HepG2 (cell line): ENCODE measurements at regions of chr14 and their contacts with region 1.

Region 1: GRCh38 chr14:34714320-34715126 is at the start of gene CFL2:
- DNase-seq: peak; percentile 86
- ATAC-seq: peak; percentile 98
- H3K4me3 ChIP-seq: peak within 1 kb of the TSS; percentile 92 to 97 (median 96)
- H3K27ac ChIP-seq: peak within 1 kb of the TSS; percentile 80
- H3K4me1 ChIP-seq: peaks cover 38% of the 10 kb centered on the region
- H3K27me3 ChIP-seq: peaks cover 0 to 11% of the 10 kb centered on the region in 2 experiments; a peak in 4 of 5 replicates
- CTCF ChIP-seq: no peak; the same call in 1 of the 2 replicates
- EP300 ChIP-seq: peak in 1 of 2 experiments; percentile 28; a peak in 1 of 4 replicates
- POLR2A ChIP-seq: peak; percentile 83 to 85
- RAD21 ChIP-seq: peak; percentile 71
- total RNA-seq, gene CFL2: 158 and 301 TPM in 2 replicates

Region 2: DNA sequence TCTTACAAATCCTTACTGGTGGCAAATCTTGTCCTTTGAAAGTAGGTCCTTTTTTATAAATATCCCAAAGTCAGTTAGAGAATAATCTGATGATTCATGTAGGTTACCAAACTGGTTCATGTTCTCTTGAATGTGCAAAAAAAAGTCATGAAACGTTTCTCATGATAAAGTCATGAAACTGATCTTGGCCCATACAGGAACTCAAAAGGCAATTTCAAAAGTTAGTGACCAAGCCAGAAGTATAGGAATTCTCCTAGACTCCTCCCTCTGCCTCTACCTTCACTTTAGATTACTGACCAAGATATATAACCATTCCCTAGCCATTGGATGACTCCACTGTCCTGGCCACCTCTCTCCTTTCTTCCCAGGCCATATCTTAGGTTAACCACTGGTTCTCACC is 225.2 kb before region 1 on chr14:
- CTCF ChIA-PET with region 1: no interaction called
- POLR2A ChIA-PET with region 1: no interaction called
- in situ Hi-C with region 1: no loop called
- intact Hi-C with region 1: no loop called
- DNase-seq: no peak
- ATAC-seq: no peak
- H3K4me3 ChIP-seq: no peak overlapping the region
- H3K27ac ChIP-seq: no peak overlapping the region
- H3K4me1 ChIP-seq: peaks cover 23% of the 10 kb centered on the region
- H3K27me3 ChIP-seq: no peaks in the 10 kb centered on the region
- CTCF ChIP-seq: no peak
- EP300 ChIP-seq: no peak
- POLR2A ChIP-seq: no peak
- RAD21 ChIP-seq: no peak

Region 3: GRCh38 chr14:34678306-34678705 is 36.2 kb before region 1 on chr14:
- CTCF ChIA-PET with region 1: interaction called, 203 read pairs
- POLR2A ChIA-PET with region 1: interaction called, 11 read pairs
- in situ Hi-C with region 1: no loop called
- intact Hi-C with region 1: no loop called
- DNase-seq: no peak
- ATAC-seq: no peak
- H3K4me3 ChIP-seq: no peak overlapping the region
- H3K27ac ChIP-seq: no peak overlapping the region
- H3K4me1 ChIP-seq: peaks cover 35% of the 10 kb centered on the region
- H3K27me3 ChIP-seq: peaks cover 0 to 2% of the 10 kb centered on the region in 2 experiments; a peak in 3 of 5 replicates
- CTCF ChIP-seq: no peak
- EP300 ChIP-seq: no peak
- POLR2A ChIP-seq: no peak
- RAD21 ChIP-seq: no peak

Region 4: GRCh38 chr14:34685819-34686428 is 28.6 kb before region 1 on chr14:
- CTCF ChIA-PET with region 1: no interaction called
- POLR2A ChIA-PET with region 1: interaction called, 61 read pairs
- in situ Hi-C with region 1: no loop called
- intact Hi-C with region 1: no loop called
- DNase-seq: no peak
- ATAC-seq: peak; percentile 49
- H3K4me3 ChIP-seq: peak overlapping the region in 2 of 3 experiments; percentile 1 to 20; a peak in 1 of 6 replicates
- H3K27ac ChIP-seq: peak overlapping the region; percentile 6
- H3K4me1 ChIP-seq: peaks cover 65% of the 10 kb centered on the region
- H3K27me3 ChIP-seq: no peaks in the 10 kb centered on the region; a peak in 1 of 5 replicates
- CTCF ChIP-seq: no peak
- EP300 ChIP-seq: no peak
- POLR2A ChIP-seq: no peak
- RAD21 ChIP-seq: no peak

Region 5: GRCh38 chr14:34693228-34693939 is 21.1 kb before region 1 on chr14:
- CTCF ChIA-PET with region 1: no interaction called
- POLR2A ChIA-PET with region 1: interaction called, 61 read pairs
- in situ Hi-C with region 1: no loop called
- intact Hi-C with region 1: no loop called
- DNase-seq: peak; percentile 45
- ATAC-seq: peak; percentile 85
- H3K4me3 ChIP-seq: peak overlapping the region; percentile 57 to 77 (median 70)
- H3K27ac ChIP-seq: peak overlapping the region; percentile 9
- H3K4me1 ChIP-seq: peaks cover 63% of the 10 kb centered on the region
- H3K27me3 ChIP-seq: no peaks in the 10 kb centered on the region
- CTCF ChIP-seq: no peak; the same call in 1 of the 2 replicates
- EP300 ChIP-seq: 0 out of 4 replicates have a peak, but pooled peaks of 1 of the 2 experiments have one; percentile 15
- POLR2A ChIP-seq: peak; percentile 48 to 85
- RAD21 ChIP-seq: no peak

Region 6: GRCh38 chr14:34699873-34700621 is 14.5 kb before region 1 on chr14:
- CTCF ChIA-PET with region 1: no interaction called
- POLR2A ChIA-PET with region 1: interaction called, 61 read pairs
- in situ Hi-C with region 1: no loop called
- intact Hi-C with region 1: no loop called
- DNase-seq: peak; percentile 89
- ATAC-seq: peak; percentile 85
- H3K4me3 ChIP-seq: no peak overlapping the region
- H3K27ac ChIP-seq: peak overlapping the region; percentile 2
- H3K4me1 ChIP-seq: peaks cover 15% of the 10 kb centered on the region
- H3K27me3 ChIP-seq: no peaks in the 10 kb centered on the region
- CTCF ChIP-seq: no peak
- EP300 ChIP-seq: peak; percentile 60 to 66; a peak in 3 of 4 replicates
- POLR2A ChIP-seq: no peak
- RAD21 ChIP-seq: no peak